HEK293 (cell line): ENCODE measurements at regions of chr10 and their contacts with region 1.

Region 1: GRCh38 chr10:98309366-98310355 is 41.7 kb upstream of the LOXL4 start:
- H3K4me3 ChIP-seq: no peak overlapping the region
- H3K27ac ChIP-seq: no peak overlapping the region
- H3K4me1 ChIP-seq: no peaks in the 10 kb centered on the region
- CTCF ChIP-seq: peak; percentile 84

Region 2: DNA sequence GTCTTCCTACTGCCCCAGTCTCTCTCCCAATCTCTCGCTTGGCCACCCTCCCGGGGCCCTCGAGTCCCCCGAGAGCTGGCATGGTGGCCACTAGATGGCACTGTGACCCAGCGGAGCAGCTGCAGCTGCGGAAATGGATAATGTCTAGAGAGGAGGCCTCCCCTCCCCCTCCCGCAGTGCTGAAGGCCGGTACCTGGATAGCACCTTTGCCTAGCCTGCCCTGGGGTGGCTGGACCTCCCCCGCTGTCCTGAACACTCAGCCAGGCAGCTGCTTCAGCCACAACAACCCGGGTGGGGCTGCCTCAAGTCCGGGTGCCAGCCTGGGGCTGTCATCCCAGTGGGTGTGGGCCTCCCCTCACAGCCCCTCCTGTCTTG is 394.8 kb before region 1 on chr10:
- CTCF ChIA-PET with region 1: interaction called, 14 read pairs
- POLR2A ChIA-PET with region 1: no interaction called
- H3K4me3 ChIP-seq: no peak overlapping the region
- H3K27ac ChIP-seq: no peak overlapping the region
- H3K4me1 ChIP-seq: no peaks in the 10 kb centered on the region
- CTCF ChIP-seq: peak; percentile 91

Region 3: DNA sequence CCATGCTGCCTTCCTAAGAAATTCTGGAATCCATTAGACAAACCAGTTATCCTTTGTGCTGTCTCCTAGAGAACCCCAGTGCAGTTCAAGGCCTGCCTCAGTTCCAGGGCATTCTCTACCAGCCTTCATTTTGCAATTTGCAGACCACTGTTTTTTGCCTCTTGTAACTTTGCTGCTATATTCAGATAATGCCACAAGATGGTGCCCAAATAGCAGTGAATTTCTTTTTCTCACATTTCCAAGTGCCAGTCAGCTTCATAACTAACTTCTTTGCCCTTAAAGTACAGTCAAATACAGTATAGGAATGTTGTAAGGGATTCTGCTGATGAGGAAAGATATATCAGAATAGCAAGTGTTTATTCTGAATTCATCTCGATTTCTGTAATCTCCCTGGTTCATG is 66.8 kb before region 1 on chr10:
- CTCF ChIA-PET with region 1: interaction called, 67 read pairs
- POLR2A ChIA-PET with region 1: no interaction called
- H3K4me3 ChIP-seq: no peak overlapping the region
- H3K27ac ChIP-seq: no peak overlapping the region
- H3K4me1 ChIP-seq: no peaks in the 10 kb centered on the region
- CTCF ChIP-seq: no peak

Region 4: DNA sequence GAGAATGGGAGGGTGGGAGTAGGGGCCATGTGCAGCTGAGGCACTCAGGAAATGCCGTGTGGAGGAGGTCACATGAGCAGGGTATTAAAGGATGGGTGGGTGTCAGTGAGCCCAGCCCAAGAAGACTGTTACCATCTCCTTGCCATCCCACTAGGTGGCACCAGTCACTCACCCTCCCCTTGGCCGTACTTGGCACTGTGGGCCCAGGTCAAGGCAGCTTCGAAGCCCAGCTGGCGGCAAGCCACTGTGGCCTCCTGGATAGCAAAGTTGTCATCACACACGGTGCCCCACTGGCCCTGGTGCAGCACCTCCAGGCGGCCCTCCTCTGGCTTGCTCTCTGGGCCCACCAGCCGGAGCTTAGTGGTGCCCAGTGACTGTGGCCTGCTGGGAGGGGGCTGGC is 47.1 kb before region 1 on chr10:
- CTCF ChIA-PET with region 1: interaction called, 46 read pairs
- POLR2A ChIA-PET with region 1: no interaction called
- H3K4me3 ChIP-seq: no peak overlapping the region
- H3K27ac ChIP-seq: no peak overlapping the region
- H3K4me1 ChIP-seq: no peaks in the 10 kb centered on the region; the same call in 1 of the 2 replicates
- CTCF ChIP-seq: no peak

Region 5: GRCh38 chr10:98323221-98324164 is 13.8 kb after region 1 on chr10:
- CTCF ChIA-PET with region 1: interaction called, 18 read pairs
- POLR2A ChIA-PET with region 1: no interaction called
- H3K4me3 ChIP-seq: no peak overlapping the region
- H3K27ac ChIP-seq: no peak overlapping the region
- H3K4me1 ChIP-seq: no peaks in the 10 kb centered on the region
- CTCF ChIP-seq: no peak